CD14-positive monocyte (primary cell): ENCODE measurements at regions of chr12 and their contacts with region 1.

Region 1: DNA sequence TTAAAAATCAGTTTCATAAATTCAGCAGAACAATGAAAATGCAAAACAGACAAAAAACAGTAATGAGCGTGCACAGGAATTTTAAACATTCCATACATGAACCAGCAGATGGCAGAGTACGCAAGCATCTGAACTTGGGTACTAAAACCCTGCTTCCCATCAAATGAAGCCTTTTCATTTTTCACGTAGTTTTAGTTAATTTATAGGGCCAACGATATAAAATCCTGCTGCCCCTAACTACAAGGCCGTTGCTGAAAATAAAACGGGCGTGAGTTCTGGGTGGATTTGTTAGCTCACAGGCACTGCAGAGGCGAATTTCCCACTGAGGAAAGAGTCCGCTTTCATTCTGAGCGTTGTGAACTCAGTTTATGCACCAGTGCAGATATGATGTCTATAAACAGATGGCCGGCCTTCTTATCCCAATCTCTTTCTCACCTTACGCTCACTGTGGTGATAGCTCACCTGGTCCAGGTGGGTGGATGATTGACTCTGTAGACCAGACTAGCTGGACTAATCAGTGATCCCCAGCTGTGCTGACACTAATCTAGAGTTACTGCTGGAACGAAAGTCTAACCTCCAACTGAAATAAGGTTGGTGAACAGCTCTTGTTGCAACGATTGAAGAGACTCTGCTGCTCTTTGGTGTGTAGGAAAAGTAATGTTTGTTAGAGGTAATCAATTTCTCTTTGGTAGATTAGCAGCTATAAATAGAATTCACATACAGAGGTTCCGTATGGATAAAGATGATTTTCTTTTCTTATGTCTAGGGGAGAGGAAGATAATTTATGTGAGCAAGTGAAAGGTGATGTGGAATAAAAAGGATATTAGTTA is 89.2 kb downstream of the PDZRN4 start:
- DNase-seq: peak; percentile 15 to 58 (median 40)
- H3K4me3 ChIP-seq: no peak overlapping the region
- H3K4me3 Mint-ChIP-seq: no peak overlapping the region
- H3K27ac ChIP-seq: no peak overlapping the region
- H3K27ac Mint-ChIP-seq: no peak overlapping the region
- H3K4me1 ChIP-seq: peaks cover 0 to 2% of the 10 kb centered on the region in 2 donors
- H3K4me1 Mint-ChIP-seq: peaks cover 4% of the 10 kb centered on the region
- H3K27me3 ChIP-seq: no peaks in the 10 kb centered on the region
- H3K27me3 Mint-ChIP-seq: no peaks in the 10 kb centered on the region
- CTCF ChIP-seq: peak; percentile 73

Region 2: GRCh38 chr12:42023733-42024494 is 746.6 kb after region 1 on chr12:
- intact Hi-C with region 1: loop called (anchors 2 kb)
- DNase-seq: peak; percentile 53 to 64 (median 57)
- H3K4me3 ChIP-seq: peak overlapping the region; percentile 26 to 70 (median 35)
- H3K4me3 Mint-ChIP-seq: peak overlapping the region; percentile 71 to 85
- H3K27ac ChIP-seq: no peak overlapping the region
- H3K27ac Mint-ChIP-seq: peak overlapping the region in 1 of 7 donors; percentile 48
- H3K4me1 ChIP-seq: peaks cover 11 to 19% of the 10 kb centered on the region in 2 donors
- H3K4me1 Mint-ChIP-seq: peaks cover 19% of the 10 kb centered on the region
- H3K27me3 ChIP-seq: peaks cover 0 to 2% of the 10 kb centered on the region in 2 donors
- H3K27me3 Mint-ChIP-seq: peaks cover 0 to 3% (median 0%) of the 10 kb centered on the region in 3 donors
- CTCF ChIP-seq: peak; percentile 98

Region 3: DNA sequence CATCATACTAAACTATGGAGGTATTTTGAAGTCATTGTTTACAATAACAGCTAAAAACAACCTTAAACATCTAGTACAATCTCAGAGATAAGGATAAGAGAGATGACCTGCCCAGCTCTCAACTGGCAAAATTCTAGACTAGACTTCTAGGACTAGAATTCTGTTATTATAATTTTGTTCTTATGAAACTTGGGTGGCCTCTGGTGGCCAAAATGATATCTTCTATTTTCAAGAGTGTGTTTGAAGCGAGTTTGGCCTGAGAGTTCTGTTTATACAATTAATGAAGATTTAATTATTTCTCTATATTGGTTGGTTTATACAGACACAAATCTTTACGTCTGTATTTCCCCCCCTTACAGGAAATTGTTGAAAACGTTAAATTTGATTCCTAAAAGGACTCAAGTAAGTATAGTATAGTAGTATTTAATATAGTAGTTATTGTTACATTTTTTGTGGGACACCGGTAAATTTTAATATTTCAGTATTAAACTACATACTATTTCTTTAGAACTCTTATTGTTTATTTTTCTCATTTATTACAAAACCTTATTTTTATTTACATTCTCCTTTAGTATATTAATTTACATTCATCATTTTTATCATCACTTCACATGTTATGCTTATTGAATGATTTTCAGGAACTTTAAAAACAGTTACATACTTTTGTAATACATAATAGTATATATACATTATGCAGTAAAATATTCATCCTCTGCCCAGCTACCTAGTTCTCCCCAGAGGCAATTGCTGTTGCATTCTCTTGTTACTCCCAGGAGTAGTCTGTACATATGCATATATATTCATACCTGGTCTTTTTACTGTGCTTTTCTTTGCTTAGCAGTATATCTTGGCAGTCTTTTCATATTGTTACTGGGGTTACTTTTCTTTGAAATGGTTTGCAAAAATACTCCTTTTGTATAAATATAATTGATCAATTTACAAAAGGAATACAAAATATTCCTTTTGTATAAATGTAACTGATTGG is 1055.3 kb after region 1 on chr12:
- intact Hi-C with region 1: loop called in 1 of 2 experiments (anchors 10 kb)
- DNase-seq: peak; percentile 26 to 49 (median 29)
- H3K4me3 ChIP-seq: no peak overlapping the region
- H3K4me3 Mint-ChIP-seq: no peak overlapping the region
- H3K27ac ChIP-seq: no peak overlapping the region
- H3K27ac Mint-ChIP-seq: peak overlapping the region in 1 of 7 donors; percentile 60
- H3K4me1 ChIP-seq: peaks cover 9 to 21% of the 10 kb centered on the region in 2 donors
- H3K4me1 Mint-ChIP-seq: peaks cover 42% of the 10 kb centered on the region
- H3K27me3 ChIP-seq: no peaks in the 10 kb centered on the region
- H3K27me3 Mint-ChIP-seq: peaks cover 0 to 2% (median 0%) of the 10 kb centered on the region in 3 donors
- CTCF ChIP-seq: peak; percentile 80

Region 4: GRCh38 chr12:42364698-42365097 is 1087.4 kb after region 1 on chr12:
- intact Hi-C with region 1: loop called in 1 of 2 experiments (anchors 5 kb)
- DNase-seq: no peak
- H3K4me3 ChIP-seq: no peak overlapping the region
- H3K4me3 Mint-ChIP-seq: no peak overlapping the region
- H3K27ac ChIP-seq: no peak overlapping the region
- H3K27ac Mint-ChIP-seq: peak overlapping the region in 1 of 7 donors; percentile 38
- H3K4me1 ChIP-seq: no peaks in the 10 kb centered on the region
- H3K4me1 Mint-ChIP-seq: peaks cover 9% of the 10 kb centered on the region
- H3K27me3 ChIP-seq: no peaks in the 10 kb centered on the region
- H3K27me3 Mint-ChIP-seq: no peaks in the 10 kb centered on the region
- CTCF ChIP-seq: no peak